ENCODE measurements at regions of chr1 and their contacts with region 1.

Region 1: GRCh38 chr1:84781946-84782771 is 91.9 kb upstream of the SSX2IP start:
- DNase-seq: peak; percentile 48
- H3K4me3 ChIP-seq: no peak overlapping the region
- H3K27ac ChIP-seq: no peak overlapping the region
- H3K4me1 ChIP-seq: no peaks in the 10 kb centered on the region
- H3K27me3 ChIP-seq: peaks cover 3 to 19% of the 10 kb centered on the region in 2 experiments
- CTCF ChIP-seq: peak; percentile 80 to 87
- POLR2A ChIP-seq: no peak

Region 2: GRCh38 chr1:84795966-84796600 is 13.9 kb after region 1 on chr1:
- CTCF ChIA-PET with region 1: interaction called, 29 read pairs
- POLR2A ChIA-PET with region 1: no interaction called
- dilution Hi-C with region 1: no loop called
- intact Hi-C with region 1: no loop called
- DNase-seq: no peak
- H3K4me3 ChIP-seq: no peak overlapping the region
- H3K27ac ChIP-seq: no peak overlapping the region
- H3K4me1 ChIP-seq: no peaks in the 10 kb centered on the region
- H3K27me3 ChIP-seq: peaks cover 0 to 5% of the 10 kb centered on the region in 2 experiments
- CTCF ChIP-seq: no peak
- POLR2A ChIP-seq: no peak

Region 3: DNA sequence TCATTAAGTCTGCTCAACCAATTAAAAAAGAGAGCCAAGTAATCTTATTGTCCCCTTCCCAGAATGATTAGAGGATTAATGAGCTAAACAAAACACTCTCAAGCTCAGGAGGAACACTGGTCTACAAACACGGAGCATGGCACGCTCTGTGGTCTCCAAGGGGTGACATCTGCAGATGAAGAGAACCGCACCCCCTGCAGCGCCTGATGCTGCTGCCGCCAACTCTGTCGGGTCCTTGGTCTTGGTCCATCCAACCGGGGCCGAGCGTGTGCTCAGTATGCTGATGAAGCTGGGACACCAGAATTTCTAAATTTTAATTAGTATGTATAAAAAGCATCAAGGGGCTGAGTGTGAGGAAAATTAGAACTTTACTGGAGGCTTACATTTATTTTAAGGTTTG is 28.2 kb after region 1 on chr1:
- CTCF ChIA-PET with region 1: interaction called, 10 read pairs
- POLR2A ChIA-PET with region 1: no interaction called
- dilution Hi-C with region 1: no loop called
- intact Hi-C with region 1: no loop called
- DNase-seq: no peak
- H3K4me3 ChIP-seq: no peak overlapping the region
- H3K27ac ChIP-seq: no peak overlapping the region
- H3K4me1 ChIP-seq: no peaks in the 10 kb centered on the region
- H3K27me3 ChIP-seq: peaks cover 10 to 24% of the 10 kb centered on the region in 2 experiments
- CTCF ChIP-seq: no peak
- POLR2A ChIP-seq: no peak

Region 4: GRCh38 chr1:84913555-84913892 is 131.4 kb after region 1 on chr1:
- CTCF ChIA-PET with region 1: no interaction called
- POLR2A ChIA-PET with region 1: no interaction called
- dilution Hi-C with region 1: no loop called
- intact Hi-C with region 1: no loop called
- DNase-seq: no peak
- H3K4me3 ChIP-seq: no peak overlapping the region
- H3K27ac ChIP-seq: no peak overlapping the region
- H3K4me1 ChIP-seq: no peaks in the 10 kb centered on the region
- H3K27me3 ChIP-seq: peaks cover 0 to 18% of the 10 kb centered on the region in 2 experiments
- CTCF ChIP-seq: no peak
- POLR2A ChIP-seq: no peak